PC-3 (cell line): ENCODE measurements at regions of chr18 and their contacts with region 1.

Region 1: DNA sequence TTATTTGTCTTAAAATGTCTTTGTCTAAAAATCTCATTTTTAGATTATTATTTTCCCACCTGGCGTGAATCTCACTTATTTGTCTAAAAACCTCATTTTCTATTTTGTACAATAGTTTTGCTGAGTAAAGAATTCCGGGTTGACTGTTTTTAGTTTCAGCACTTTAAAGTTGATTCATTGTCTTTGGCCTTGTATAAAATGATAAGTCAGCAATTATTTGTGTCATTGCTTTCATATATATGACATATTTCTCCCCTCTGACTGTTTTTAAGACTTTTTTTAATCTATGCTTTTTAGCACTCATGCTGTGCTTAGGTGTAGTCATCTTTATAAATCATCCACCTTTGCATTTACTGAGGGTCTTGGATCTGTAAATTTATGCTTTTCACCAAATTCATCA is 92.1 kb upstream of the DOK6 start:
- DNase-seq: no peak
- ATAC-seq: no peak
- H3K4me3 ChIP-seq: no peak overlapping the region
- H3K27ac ChIP-seq: no peak overlapping the region
- H3K4me1 ChIP-seq: no peaks in the 10 kb centered on the region
- H3K27me3 ChIP-seq: no peaks in the 10 kb centered on the region
- CTCF ChIP-seq: no peak

Region 2: GRCh38 chr18:69230204-69230603 is 78.4 kb before region 1 on chr18:
- CTCF ChIA-PET with region 1: no interaction called
- POLR2A ChIA-PET with region 1: no interaction called
- intact Hi-C with region 1: no loop called
- DNase-seq: no peak
- ATAC-seq: no peak
- H3K4me3 ChIP-seq: no peak overlapping the region
- H3K27ac ChIP-seq: no peak overlapping the region
- H3K4me1 ChIP-seq: no peaks in the 10 kb centered on the region
- H3K27me3 ChIP-seq: no peaks in the 10 kb centered on the region
- CTCF ChIP-seq: no peak

Region 3: GRCh38 chr18:69291044-69291443 is 17.6 kb before region 1 on chr18:
- CTCF ChIA-PET with region 1: no interaction called
- POLR2A ChIA-PET with region 1: no interaction called
- intact Hi-C with region 1: no loop called
- DNase-seq: no peak
- ATAC-seq: no peak
- H3K4me3 ChIP-seq: no peak overlapping the region
- H3K27ac ChIP-seq: no peak overlapping the region
- H3K4me1 ChIP-seq: no peaks in the 10 kb centered on the region
- H3K27me3 ChIP-seq: no peaks in the 10 kb centered on the region; the same call in 1 of the 2 replicates
- CTCF ChIP-seq: no peak

Region 4: GRCh38 chr18:69874058-69874457 is 565.4 kb after region 1 on chr18:
- CTCF ChIA-PET with region 1: no interaction called
- POLR2A ChIA-PET with region 1: interaction called, 30 read pairs
- intact Hi-C with region 1: no loop called
- DNase-seq: no peak
- ATAC-seq: no peak
- H3K4me3 ChIP-seq: no peak overlapping the region
- H3K27ac ChIP-seq: no peak overlapping the region
- H3K4me1 ChIP-seq: no peaks in the 10 kb centered on the region
- H3K27me3 ChIP-seq: no peaks in the 10 kb centered on the region
- CTCF ChIP-seq: no peak

Region 5: GRCh38 chr18:70004696-70005095 is 696.1 kb after region 1 on chr18:
- CTCF ChIA-PET with region 1: no interaction called
- POLR2A ChIA-PET with region 1: no interaction called
- intact Hi-C with region 1: no loop called
- DNase-seq: no peak
- ATAC-seq: no peak
- H3K4me3 ChIP-seq: no peak overlapping the region
- H3K27ac ChIP-seq: no peak overlapping the region
- H3K4me1 ChIP-seq: no peaks in the 10 kb centered on the region
- H3K27me3 ChIP-seq: no peaks in the 10 kb centered on the region
- CTCF ChIP-seq: no peak

Region 6: DNA sequence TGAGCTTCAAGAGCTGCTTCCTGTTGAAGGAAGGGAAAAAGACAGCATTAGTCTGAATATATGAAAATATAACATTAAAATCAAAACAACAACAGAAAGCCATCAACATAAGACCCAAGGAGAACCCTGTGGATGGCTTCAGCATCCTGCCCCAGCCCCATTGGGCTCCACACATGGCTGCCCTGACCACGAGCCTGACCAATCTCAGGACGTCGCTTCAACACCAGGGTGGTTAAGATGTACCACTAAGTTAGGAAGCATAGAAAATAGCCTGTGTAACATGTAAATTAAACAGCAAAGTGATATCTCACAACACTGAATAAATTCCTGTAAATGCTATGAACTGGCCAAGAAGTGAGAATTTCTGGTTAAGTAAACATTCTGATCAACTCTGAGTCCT is 716.2 kb after region 1 on chr18:
- CTCF ChIA-PET with region 1: no interaction called
- POLR2A ChIA-PET with region 1: interaction called, 11 read pairs
- intact Hi-C with region 1: no loop called
- DNase-seq: no peak
- ATAC-seq: no peak
- H3K4me3 ChIP-seq: no peak overlapping the region
- H3K27ac ChIP-seq: no peak overlapping the region
- H3K4me1 ChIP-seq: no peaks in the 10 kb centered on the region
- H3K27me3 ChIP-seq: no peaks in the 10 kb centered on the region
- CTCF ChIP-seq: no peak